Astrocyte of the cerebellum (primary cell): ENCODE measurements at regions of chr1 and their contacts with region 1.

Region 1: GRCh38 chr1:219523411-219523810 is 89.5 kb downstream of the ZC3H11B start:
- DNase-seq: no peak
- H3K4me3 ChIP-seq: no peak overlapping the region
- CTCF ChIP-seq: no peak

Region 2: DNA sequence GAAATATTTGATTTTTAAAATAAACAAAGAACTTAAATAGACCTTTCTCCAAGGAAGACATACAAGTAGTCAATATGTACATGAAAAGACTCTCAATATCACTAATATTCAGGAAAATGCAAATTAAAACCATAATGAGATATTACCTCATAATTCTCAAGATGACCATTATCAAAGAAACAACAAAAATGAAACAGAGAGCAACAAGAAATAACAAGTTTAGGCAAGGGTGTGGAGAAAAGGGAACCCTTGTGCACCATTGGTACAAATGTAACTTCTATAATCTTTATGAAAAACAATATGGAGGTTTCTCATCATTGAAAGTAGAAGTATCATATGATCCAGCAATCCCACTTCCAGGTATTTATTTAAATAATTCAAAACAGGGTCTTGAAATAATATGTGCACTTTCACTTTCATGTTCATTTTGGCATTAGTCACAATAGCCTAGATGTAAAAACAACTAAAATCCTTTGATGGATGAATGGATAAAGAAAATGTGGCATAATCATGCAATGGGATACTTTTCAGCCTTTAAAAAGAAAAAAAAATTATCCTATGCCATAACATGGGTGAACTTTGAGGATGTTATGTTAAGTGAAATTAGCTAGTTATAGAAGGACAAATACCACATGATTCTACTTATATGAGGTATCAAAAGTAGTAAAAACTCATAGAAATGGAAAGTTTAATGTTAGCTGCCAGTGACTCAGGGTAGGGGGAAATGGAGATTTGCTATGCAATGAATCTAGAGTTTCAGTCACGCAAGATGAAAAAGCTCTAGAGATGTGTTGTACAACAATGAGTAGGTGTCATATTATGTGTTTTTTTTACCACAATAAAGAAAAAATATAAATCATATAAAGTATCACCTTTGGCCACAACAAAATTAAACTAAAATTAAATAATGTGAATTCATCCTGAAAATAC is 464.3 kb before region 1 on chr1:
- in situ Hi-C with region 1: no loop called
- DNase-seq: no peak
- H3K4me3 ChIP-seq: no peak overlapping the region
- CTCF ChIP-seq: no peak

Region 3: DNA sequence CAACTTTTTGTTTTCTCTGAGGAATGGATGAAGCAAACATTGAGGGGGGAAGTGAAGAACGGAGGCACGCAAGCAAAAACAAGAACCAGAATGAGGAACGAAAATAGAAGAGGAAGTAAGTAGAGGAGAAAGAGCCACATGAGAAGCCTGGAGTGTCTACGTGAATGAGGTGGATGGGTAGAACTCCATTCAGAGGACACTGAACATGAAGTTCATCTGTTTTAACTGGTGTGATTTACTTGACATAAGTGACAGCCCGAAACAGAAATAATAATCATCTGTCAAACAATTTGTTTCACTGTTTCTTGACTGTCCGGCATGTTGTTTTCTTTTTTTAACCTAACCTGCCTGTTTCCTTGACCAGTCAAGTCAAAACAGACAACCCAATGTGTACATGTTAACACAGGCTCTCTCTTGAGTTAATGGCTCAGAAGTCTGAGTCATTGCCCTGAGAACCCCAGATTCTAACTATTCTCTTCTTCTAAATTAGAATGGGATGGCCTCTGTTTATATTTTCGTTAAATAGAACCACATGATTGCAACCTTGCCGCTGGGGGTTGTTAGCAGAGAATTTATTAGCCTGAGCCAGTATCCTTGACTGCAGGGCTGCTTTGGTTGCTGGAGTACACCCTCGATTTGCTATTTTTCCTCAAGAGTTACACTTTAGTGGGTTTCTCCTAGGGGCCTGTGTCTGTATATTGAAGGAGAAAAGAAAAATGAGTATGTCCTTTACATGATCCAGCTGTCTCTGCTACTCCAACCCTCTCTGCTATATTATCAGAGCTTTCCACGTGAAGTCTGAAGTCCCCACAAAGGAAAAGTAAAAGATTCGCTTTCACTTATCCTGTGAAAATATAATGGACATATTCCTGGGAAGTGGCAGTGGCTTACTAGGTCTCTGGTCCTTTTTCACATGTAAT is 62.3 kb before region 1 on chr1:
- in situ Hi-C with region 1: no loop called
- DNase-seq: no peak
- H3K4me3 ChIP-seq: no peak overlapping the region
- CTCF ChIP-seq: no peak

Region 4: GRCh38 chr1:219489636-219490035 is 33.8 kb before region 1 on chr1:
- in situ Hi-C with region 1: loop called (anchors 5 kb)
- DNase-seq: no peak
- H3K4me3 ChIP-seq: no peak overlapping the region
- CTCF ChIP-seq: no peak